ENCODE measurements at regions of chr19 and their contacts with region 1.

Region 1: GRCh38 chr19:11374433-11375142 is at the start of gene SWSAP1:
- DNase-seq: peak; percentile 97 to 98
- H3K4me3 ChIP-seq: peak within 1 kb of the TSS; percentile 85
- H3K4me3 Mint-ChIP-seq: peak within 1 kb of the TSS; percentile 41
- H3K27ac Mint-ChIP-seq: peak within 1 kb of the TSS; percentile 8
- H3K4me1 ChIP-seq: peaks cover 10% of the 10 kb centered on the region; the same call in 1 of the 2 replicates
- H3K4me1 Mint-ChIP-seq: no peaks in the 10 kb centered on the region
- H3K27me3 ChIP-seq: no peaks in the 10 kb centered on the region
- H3K27me3 Mint-ChIP-seq: no peaks in the 10 kb centered on the region
- CTCF ChIP-seq: no peak
- total RNA-seq, gene SWSAP1: 3.7 and 3.9 TPM in 2 replicates

Region 2: DNA sequence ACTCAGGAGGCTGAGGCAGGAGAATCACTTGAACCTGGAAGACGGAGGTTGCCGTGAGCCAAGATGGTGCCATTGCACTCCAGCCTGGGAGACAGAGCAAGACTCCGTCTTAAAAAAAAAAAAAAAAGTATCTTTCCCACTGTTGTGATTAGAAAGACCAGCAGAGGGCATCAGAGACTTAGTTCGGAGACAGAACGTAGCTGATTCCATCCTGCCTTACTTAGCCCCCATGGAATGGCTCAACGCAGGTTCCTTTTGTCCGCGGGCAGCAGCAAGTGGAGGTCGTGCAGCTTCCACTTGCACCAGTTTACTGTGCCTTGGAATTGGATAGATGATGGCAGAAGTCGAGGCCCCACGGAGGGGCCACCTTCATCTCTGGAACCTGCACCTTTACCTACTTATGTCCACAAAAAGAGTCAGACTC is 437.9 kb before region 1 on chr19:
- CTCF ChIA-PET with region 1: no interaction called
- POLR2A ChIA-PET with region 1: no interaction called
- intact Hi-C with region 1: no loop called
- DNase-seq: peak; percentile 75 to 80
- H3K4me3 ChIP-seq: no peak overlapping the region
- H3K4me3 Mint-ChIP-seq: peak overlapping the region; percentile 49
- H3K27ac Mint-ChIP-seq: peak overlapping the region; percentile 57
- H3K4me1 ChIP-seq: peaks cover 28% of the 10 kb centered on the region
- H3K4me1 Mint-ChIP-seq: peaks cover 7% of the 10 kb centered on the region
- H3K27me3 ChIP-seq: no peaks in the 10 kb centered on the region
- H3K27me3 Mint-ChIP-seq: no peaks in the 10 kb centered on the region
- CTCF ChIP-seq: peak; percentile 71 to 76

Region 3: GRCh38 chr19:11346092-11346940 is 28.3 kb before region 1 on chr19 and contains the starts of genes CCDC159 and TMEM205:
- CTCF ChIA-PET with region 1: interaction called, 3 read pairs
- POLR2A ChIA-PET with region 1: interaction called, 15 read pairs
- intact Hi-C with region 1: loop called (anchors 2 kb)
- DNase-seq: peak; percentile 97 to 98
- H3K4me3 ChIP-seq: peak within 1 kb of the TSS; percentile 47
- H3K4me3 Mint-ChIP-seq: peak within 1 kb of the TSS; percentile 94
- H3K27ac Mint-ChIP-seq: peak within 1 kb of the TSS; percentile 92
- H3K4me1 ChIP-seq: peaks cover 17% of the 10 kb centered on the region
- H3K4me1 Mint-ChIP-seq: peaks cover 29% of the 10 kb centered on the region
- H3K27me3 ChIP-seq: no peaks in the 10 kb centered on the region
- H3K27me3 Mint-ChIP-seq: no peaks in the 10 kb centered on the region
- CTCF ChIP-seq: peak in 1 of 2 experiments; percentile 1
- total RNA-seq, gene CCDC159: 11.7 and 13.9 TPM in 2 replicates
- total RNA-seq, gene TMEM205: 68.3 and 76.1 TPM in 2 replicates

Region 4: GRCh38 chr19:11482384-11483050 is 107.9 kb after region 1 on chr19:
- CTCF ChIA-PET with region 1: interaction called, 16 read pairs
- POLR2A ChIA-PET with region 1: interaction called, 5 read pairs
- intact Hi-C with region 1: no loop called
- DNase-seq: peak; percentile 78 to 88
- H3K4me3 ChIP-seq: peak overlapping the region; percentile 45
- H3K4me3 Mint-ChIP-seq: peak overlapping the region; percentile 71
- H3K27ac Mint-ChIP-seq: peak overlapping the region; percentile 19
- H3K4me1 ChIP-seq: peaks cover 16% of the 10 kb centered on the region
- H3K4me1 Mint-ChIP-seq: no peaks in the 10 kb centered on the region
- H3K27me3 ChIP-seq: no peaks in the 10 kb centered on the region; the same call in 1 of the 2 replicates
- H3K27me3 Mint-ChIP-seq: peaks cover 9% of the 10 kb centered on the region
- CTCF ChIP-seq: peak; percentile 81 to 91

Region 5: GRCh38 chr19:11528551-11529341 is 154.2 kb after region 1 on chr19 and contains the start of gene ECSIT:
- CTCF ChIA-PET with region 1: interaction called, 5 read pairs
- POLR2A ChIA-PET with region 1: interaction called, 11 read pairs
- intact Hi-C with region 1: no loop called
- DNase-seq: peak; percentile 96 to 98
- H3K4me3 ChIP-seq: peak within 1 kb of the TSS; percentile 46
- H3K4me3 Mint-ChIP-seq: peak within 1 kb of the TSS; percentile 99
- H3K27ac Mint-ChIP-seq: peak within 1 kb of the TSS; percentile 97
- H3K4me1 ChIP-seq: peaks cover 6% of the 10 kb centered on the region; the same call in 1 of the 2 replicates
- H3K4me1 Mint-ChIP-seq: peaks cover 6% of the 10 kb centered on the region
- H3K27me3 ChIP-seq: no peaks in the 10 kb centered on the region
- H3K27me3 Mint-ChIP-seq: no peaks in the 10 kb centered on the region
- CTCF ChIP-seq: no peak
- total RNA-seq, gene ECSIT: 39.8 and 44.8 TPM in 2 replicates

Measured in Caco-2 (cell line).